Common myeloid progenitor, CD34-positive (primary cell): ENCODE measurements at regions of chr10 and their contacts with region 1.

Region 1: DNA sequence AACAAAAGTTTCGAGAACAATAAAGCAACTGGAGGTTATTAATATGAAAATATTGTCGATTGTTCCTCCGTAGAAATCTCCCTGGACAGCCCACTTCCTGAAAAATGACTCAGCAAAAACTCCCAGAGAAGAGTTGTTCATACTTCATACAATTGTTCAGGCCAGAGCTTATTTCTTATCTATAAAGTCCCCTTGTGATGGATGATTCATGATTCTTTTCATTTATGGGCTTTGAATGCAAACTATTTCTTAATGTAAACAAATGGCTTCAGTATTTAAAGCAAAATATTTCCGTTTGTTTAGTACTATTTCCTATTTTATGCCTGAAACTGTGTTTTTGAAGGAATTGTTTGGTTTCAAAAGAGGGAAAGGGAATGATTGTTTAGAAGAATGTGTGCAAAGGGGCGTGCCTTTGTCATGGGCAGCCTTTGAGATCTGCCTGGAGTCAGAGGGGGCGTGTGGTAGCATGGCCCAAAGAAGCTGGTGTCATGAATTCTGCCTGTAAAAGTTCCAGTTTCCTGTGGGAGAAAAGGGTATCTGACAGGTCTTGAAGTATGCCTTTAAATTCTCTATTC is 26.2 kb upstream of the EXOC6 start:
- DNase-seq: peak; percentile 80 to 93 (median 90)
- H3K4me3 ChIP-seq: peak overlapping the region in 3 of 7 experiments; percentile 3 to 56 (median 30)
- H3K27ac ChIP-seq: peak overlapping the region; percentile 46 to 50
- H3K4me1 ChIP-seq: peaks cover 6 to 30% (median 21%) of the 10 kb centered on the region in 4 experiments
- H3K27me3 ChIP-seq: no peaks in the 10 kb centered on the region

Region 2: GRCh38 chr10:92839191-92840085 is 17.3 kb after region 1 on chr10:
- CTCF ChIA-PET with region 1: interaction called, 10 read pairs
- POLR2A ChIA-PET with region 1: interaction called, 5 read pairs
- DNase-seq: peak; percentile 65 to 86 (median 85)
- H3K4me3 ChIP-seq: no peak overlapping the region
- H3K27ac ChIP-seq: no peak overlapping the region
- H3K4me1 ChIP-seq: peaks cover 7 to 28% (median 16%) of the 10 kb centered on the region in 4 experiments
- H3K27me3 ChIP-seq: no peaks in the 10 kb centered on the region

Region 3: GRCh38 chr10:92880233-92880861 is 58.2 kb after region 1 on chr10:
- CTCF ChIA-PET with region 1: interaction called, 12 read pairs
- POLR2A ChIA-PET with region 1: no interaction called
- DNase-seq: peak; percentile 68 to 77 (median 69)
- H3K4me3 ChIP-seq: no peak overlapping the region
- H3K27ac ChIP-seq: no peak overlapping the region
- H3K4me1 ChIP-seq: peaks cover 15 to 34% (median 21%) of the 10 kb centered on the region in 4 experiments
- H3K27me3 ChIP-seq: no peaks in the 10 kb centered on the region